Endothelial cell of umbilical vein (primary cell): ENCODE measurements at regions of chr22 and their contacts with region 1.

Region 1: GRCh38 chr22:28800308-28801077 is at the start of gene XBP1:
- DNase-seq: peak; percentile 95
- H3K4me3 ChIP-seq: peak within 1 kb of the TSS; percentile 84 to 100 (median 100)
- H3K27ac ChIP-seq: peak within 1 kb of the TSS; percentile 100
- H3K4me1 ChIP-seq: peaks cover 26% of the 10 kb centered on the region
- H3K27me3 ChIP-seq: no peaks in the 10 kb centered on the region
- CTCF ChIP-seq: no peak
- POLR2A ChIP-seq: peak; percentile 94
- total RNA-seq, gene XBP1: 90.4 and 103 TPM in 2 replicates

Region 2: DNA sequence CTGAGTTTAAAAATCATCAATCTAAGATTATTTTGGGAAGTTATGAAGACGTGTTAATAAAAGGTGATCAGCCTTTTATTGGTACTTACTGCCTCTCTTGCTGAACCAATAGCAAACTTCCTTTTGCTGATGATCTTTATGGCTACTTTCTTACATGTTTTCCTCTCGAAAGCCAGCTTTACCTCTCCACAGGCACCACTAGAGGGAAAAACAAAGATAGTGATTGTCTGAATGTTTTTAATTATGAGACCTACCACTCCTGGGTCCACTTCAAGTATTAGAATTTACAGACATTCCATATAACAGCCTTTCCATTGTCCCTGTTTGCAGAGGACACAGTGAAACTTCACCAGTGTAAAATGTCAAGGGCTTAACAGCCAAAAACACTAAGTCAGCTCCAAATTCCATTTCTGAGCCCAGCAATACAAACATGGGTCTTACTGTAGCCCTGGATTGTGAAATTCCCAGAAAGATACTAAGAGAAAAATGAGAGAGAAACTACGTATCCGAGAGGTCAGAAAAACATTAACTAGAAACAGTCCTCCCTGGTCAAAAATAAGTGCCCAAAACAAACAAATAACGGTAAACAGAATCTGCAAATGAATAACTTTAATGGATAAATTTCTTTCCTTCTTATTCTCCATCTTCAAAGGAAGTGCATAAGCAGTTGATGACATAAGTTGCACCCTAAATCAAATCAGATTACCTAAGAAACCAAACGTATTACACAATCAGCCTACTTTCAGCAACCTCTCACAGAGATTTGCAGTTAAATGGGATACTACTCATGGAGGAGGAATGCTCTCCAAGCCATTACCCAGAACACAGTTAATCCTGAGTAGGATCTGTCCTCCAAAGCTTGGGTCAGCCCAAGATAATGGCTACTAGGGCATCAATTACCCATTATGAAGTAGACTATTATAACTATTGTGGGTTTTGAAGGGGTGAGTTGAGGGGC is 88.4 kb before region 1 on chr22:
- CTCF ChIA-PET with region 1: interaction called, 3 read pairs
- POLR2A ChIA-PET with region 1: interaction called, 4 read pairs
- dilution Hi-C with region 1: no loop called
- intact Hi-C with region 1: loop called (anchors 2 kb)
- DNase-seq: peak; percentile 55
- H3K4me3 ChIP-seq: no peak overlapping the region
- H3K27ac ChIP-seq: peak overlapping the region; percentile 96
- H3K4me1 ChIP-seq: peaks cover 35% of the 10 kb centered on the region
- H3K27me3 ChIP-seq: no peaks in the 10 kb centered on the region
- CTCF ChIP-seq: no peak
- POLR2A ChIP-seq: no peak

Region 3: DNA sequence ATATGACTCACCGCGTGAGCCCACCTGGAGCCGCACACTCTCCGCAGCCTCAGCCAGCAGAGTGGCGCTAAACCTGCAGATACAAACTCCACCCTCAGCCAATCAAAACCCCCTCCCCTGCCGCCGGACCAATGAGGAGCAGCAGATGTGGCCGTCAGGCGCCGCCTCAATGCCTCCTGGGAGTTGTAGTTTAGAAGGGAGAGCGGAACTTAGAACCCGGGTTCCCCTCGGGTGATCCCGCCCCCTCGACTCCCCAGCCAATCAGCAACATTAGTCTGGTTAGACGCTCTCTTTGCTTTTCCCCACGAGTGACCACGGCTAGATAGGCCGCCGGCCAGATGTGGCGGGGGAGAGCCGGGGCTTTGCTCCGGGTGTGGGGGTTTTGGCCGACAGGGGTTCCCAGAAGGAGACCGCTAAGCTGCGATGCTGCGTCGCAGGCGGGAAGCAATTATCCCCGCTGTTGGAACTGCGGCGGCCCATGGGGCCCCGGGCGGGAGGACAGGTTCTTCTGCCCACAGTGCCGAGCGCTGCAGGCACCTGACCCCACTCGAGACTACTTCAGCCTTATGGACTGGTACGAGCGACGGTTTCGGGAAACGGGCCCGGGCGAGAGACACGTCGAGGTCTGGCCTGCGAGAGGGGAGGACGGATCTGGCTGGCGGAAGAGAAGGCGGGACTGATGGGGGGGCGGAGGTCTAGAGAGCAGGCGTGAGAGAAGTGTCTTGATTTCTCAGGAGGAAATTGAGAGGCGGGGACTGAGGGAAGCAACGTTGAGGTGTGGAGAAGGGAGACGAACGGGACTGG is 58.5 kb before region 1 on chr22 and contains the starts of genes CHEK2 and HSCB:
- CTCF ChIA-PET with region 1: no interaction called
- POLR2A ChIA-PET with region 1: interaction called, 4 read pairs
- dilution Hi-C with region 1: no loop called
- intact Hi-C with region 1: loop called (anchors 1 kb)
- DNase-seq: peak; percentile 99
- H3K4me3 ChIP-seq: peak within 1 kb of the TSS; percentile 75 to 87 (median 77)
- H3K27ac ChIP-seq: peak within 1 kb of the TSS; percentile 84
- H3K4me1 ChIP-seq: peaks cover 12% of the 10 kb centered on the region
- H3K27me3 ChIP-seq: no peaks in the 10 kb centered on the region
- CTCF ChIP-seq: peak in 1 of 2 donors; percentile 11
- POLR2A ChIP-seq: no peak
- total RNA-seq, gene CHEK2: 24.6 and 27.4 TPM in 2 replicates
- total RNA-seq, gene HSCB: 14.1 and 20.3 TPM in 2 replicates

Region 4: DNA sequence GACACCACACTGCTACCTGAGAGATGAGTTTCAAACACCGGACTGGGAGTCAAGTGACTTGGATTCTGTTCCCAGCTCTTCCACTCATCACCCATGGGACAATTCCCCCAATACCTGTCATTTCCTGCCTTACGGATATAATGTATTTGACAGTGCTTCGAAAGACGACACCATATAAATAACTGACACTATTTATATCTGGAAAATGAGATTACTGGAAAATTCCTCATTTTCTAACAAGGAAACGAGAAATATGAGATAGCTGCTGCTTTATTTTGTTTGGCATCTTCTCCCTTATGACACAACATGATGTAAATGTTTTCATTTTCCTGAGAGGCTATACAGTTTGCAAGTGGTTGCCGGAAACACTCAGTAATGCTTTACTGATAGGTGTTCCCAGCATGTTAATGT is 50.0 kb before region 1 on chr22:
- CTCF ChIA-PET with region 1: no interaction called
- POLR2A ChIA-PET with region 1: interaction called, 6 read pairs
- dilution Hi-C with region 1: no loop called
- intact Hi-C with region 1: loop called (anchors 2 kb)
- DNase-seq: peak; percentile 96
- H3K4me3 ChIP-seq: peak overlapping the region in 1 of 3 experiments; percentile 9
- H3K27ac ChIP-seq: peak overlapping the region; percentile 73
- H3K4me1 ChIP-seq: peaks cover 20% of the 10 kb centered on the region
- H3K27me3 ChIP-seq: no peaks in the 10 kb centered on the region
- CTCF ChIP-seq: no peak
- POLR2A ChIP-seq: no peak

Region 5: GRCh38 chr22:28772633-28773460 is 27.6 kb before region 1 on chr22 and contains the start of gene CCDC117:
- CTCF ChIA-PET with region 1: interaction called, 3 read pairs
- POLR2A ChIA-PET with region 1: interaction called, 3 read pairs
- dilution Hi-C with region 1: no loop called
- intact Hi-C with region 1: loop called (anchors 1 kb)
- DNase-seq: peak; percentile 94
- H3K4me3 ChIP-seq: peak within 1 kb of the TSS; percentile 31 to 85 (median 51)
- H3K27ac ChIP-seq: peak within 1 kb of the TSS; percentile 79
- H3K4me1 ChIP-seq: peaks cover 4% of the 10 kb centered on the region
- H3K27me3 ChIP-seq: no peaks in the 10 kb centered on the region
- CTCF ChIP-seq: peak; percentile 28 to 37
- POLR2A ChIP-seq: peak; percentile 93
- total RNA-seq, gene CCDC117: 22.8 and 23.3 TPM in 2 replicates

Region 6: DNA sequence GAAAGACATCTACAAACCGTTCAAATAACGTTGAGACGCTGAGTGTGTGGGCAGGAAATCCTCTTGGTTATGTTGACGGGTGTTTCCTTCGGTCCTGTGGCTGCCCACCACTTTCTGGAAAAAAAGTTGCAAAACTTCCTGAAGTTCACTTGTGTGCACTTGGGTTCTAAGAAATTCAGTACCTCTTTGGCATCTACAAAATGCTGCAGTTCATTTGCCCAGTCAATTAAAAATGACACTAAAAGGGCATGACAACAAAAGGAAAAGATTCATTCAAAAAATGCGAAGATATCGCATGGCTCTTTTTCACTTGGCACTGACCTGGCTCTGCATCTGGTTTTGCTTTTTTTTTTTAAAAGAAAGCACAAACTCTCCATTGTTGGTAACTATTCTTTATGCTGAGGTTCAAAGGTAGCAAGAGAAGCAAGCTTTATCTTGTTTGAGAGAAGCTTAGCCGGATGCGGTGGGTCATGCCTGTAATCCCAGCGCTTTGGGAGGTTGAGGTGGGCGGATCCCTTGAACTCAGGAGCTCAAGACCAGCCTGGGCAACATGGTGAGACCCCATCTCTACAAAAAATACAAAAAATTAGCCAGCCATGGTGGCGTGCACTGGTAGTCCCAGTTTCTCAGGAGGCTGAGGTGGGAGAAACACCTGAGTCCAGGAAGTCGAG is 10.5 kb after region 1 on chr22:
- CTCF ChIA-PET with region 1: interaction called, 3 read pairs
- POLR2A ChIA-PET with region 1: no interaction called
- dilution Hi-C with region 1: no loop called
- intact Hi-C with region 1: loop called (anchors 1 kb)
- DNase-seq: peak; percentile 88
- H3K4me3 ChIP-seq: peak overlapping the region in 1 of 3 experiments; percentile 2
- H3K27ac ChIP-seq: no peak overlapping the region
- H3K4me1 ChIP-seq: peaks cover 10% of the 10 kb centered on the region
- H3K27me3 ChIP-seq: no peaks in the 10 kb centered on the region
- CTCF ChIP-seq: no peak
- POLR2A ChIP-seq: no peak

Region 7: DNA sequence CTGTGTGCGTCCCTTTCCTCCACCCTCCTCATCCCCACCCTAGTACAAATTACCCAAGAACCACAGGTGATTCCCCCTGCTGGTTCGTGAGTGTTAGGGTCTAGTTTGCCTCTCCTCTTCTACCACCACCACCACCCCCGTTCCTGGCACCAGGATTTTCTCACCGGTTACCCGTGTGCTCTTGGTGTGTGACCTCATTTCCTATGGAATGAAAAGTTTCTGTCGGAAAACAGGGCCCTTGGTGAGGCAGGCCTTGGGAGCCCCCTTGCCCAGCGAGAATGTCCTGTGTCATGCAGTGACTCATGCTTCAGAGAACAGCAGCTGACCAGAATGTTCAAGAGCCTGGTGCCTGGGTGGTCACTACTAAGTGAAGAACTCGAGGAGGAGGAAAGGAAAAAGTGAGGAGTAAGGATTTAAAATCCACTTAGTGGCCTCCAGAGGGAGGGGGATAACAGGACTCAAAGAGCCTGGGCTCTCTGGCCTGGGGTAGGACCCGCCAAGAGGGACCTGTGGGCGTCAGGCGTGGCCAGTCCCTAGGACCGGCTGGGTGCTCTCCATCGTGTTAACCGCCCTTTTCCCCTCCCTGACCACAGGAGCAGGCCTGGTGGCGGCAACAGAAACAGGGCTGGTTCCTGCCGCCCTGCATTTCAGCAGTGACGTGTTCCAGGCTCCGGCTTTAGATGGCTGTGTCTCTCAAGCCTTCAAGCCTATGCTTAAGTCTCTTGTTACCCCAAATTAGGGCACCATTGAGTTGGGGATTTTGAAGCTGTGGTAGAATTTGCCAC is 230.9 kb after region 1 on chr22:
- CTCF ChIA-PET with region 1: no interaction called
- POLR2A ChIA-PET with region 1: no interaction called
- dilution Hi-C with region 1: no loop called
- intact Hi-C with region 1: loop called (anchors 2 kb)
- DNase-seq: peak; percentile 97
- H3K4me3 ChIP-seq: peak overlapping the region in 2 of 3 experiments; percentile 43 to 52
- H3K27ac ChIP-seq: peak overlapping the region; percentile 99
- H3K4me1 ChIP-seq: peaks cover 27% of the 10 kb centered on the region
- H3K27me3 ChIP-seq: no peaks in the 10 kb centered on the region
- CTCF ChIP-seq: peak in 1 of 2 donors; percentile 10
- POLR2A ChIP-seq: no peak